ENCODE measurements at regions of chr22 and their contacts with region 1.

Region 1: DNA sequence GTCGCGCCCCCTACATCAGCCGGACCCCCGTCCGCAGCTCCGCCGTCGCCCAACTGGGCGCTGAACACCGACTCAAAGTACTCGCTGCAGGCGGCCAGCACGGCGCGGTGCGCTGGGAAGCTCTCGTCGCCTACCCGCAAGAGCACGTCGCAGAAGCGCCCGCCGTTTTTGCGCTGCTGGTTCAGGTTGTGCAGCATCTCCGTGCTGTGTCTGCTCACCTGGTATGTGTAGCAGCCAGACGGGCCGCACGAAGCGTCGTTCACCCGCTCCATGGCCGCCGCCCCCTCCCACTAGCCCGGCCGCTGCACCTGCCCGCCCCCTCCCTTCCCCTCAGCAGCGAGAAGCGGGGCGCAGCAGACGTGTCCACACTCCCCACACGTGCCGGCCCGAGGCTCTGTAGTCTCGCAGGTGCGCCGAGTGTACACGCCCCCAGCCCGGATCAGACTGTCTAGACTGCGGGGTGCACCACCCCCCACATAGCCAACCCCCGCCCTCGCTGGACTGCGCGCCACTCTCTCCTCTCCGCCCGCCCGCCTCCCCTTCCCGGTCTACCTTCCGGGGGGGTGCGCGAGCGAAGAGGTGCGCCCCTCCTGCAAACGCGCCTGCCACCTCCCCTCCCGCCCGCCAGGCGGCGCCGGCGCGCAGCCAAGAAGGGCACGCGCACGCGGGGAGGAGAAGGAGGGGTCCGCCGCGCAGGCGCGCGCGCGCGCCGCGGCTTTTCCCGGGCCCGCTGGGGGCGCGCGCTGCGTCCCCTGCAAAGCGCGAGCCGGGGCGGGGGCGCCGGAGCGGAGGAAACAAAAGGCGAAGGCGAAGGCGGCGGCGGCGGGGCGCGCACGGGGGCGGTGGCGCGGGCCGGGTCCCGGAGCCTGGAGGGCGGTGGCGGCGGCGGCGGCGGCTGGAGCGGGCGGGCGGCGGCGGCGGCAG is 553 bp downstream of the PATZ1 start:
- DNase-seq: peak; percentile 97
- H3K4me3 Mint-ChIP-seq: peak overlapping the region; percentile 93
- H3K27ac Mint-ChIP-seq: peak overlapping the region; percentile 92
- H3K4me1 Mint-ChIP-seq: peaks cover 37% of the 10 kb centered on the region
- H3K27me3 Mint-ChIP-seq: no peaks in the 10 kb centered on the region

Region 2: DNA sequence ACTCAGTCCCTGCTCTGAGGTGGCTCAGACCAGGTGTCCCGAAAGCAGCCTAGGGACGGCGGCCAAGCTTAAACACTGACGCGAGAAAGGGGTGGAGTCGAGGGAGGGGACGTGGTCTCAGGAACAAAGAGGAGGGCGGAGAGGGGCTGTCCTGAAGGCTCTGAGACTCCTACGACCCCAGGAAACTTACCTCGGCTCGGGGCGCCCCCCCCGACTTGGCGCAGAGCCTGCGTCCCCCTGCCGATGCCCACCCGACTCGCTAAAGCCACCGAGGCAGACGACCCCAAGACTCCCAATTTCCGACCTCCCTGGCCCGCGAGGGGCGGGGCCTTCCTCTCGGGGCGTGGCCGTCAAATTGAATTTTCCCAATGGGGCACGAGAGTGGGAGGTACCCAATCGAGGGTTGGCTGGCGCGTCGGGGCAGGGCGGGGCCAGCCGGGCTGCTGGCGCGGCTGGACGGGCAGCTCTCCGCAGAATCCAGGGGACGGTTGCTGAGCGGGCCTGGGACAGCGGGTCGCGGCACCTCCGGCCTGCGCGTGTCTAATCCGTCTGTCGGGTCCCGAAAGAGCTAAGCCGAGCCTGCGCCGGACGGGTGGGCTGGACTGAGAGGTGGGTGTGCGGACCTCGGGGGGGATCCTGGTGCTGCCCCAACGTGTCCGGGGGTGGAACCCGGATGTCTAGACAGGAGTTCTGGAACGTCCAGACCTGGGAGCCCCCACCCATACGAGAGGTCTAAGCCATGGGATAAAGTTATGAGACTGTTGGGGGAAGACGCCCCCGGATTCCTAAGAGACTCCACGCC is 264.5 kb before region 1 on chr22 and contains the start of gene SMTN:
- intact Hi-C with region 1: loop called (anchors 10 kb)
- DNase-seq: peak; percentile 98
- H3K4me3 Mint-ChIP-seq: peak within 1 kb of the TSS; percentile 91
- H3K27ac Mint-ChIP-seq: peak within 1 kb of the TSS; percentile 78
- H3K4me1 Mint-ChIP-seq: peaks cover 35% of the 10 kb centered on the region
- H3K27me3 Mint-ChIP-seq: no peaks in the 10 kb centered on the region
- total RNA-seq, gene SMTN: 13.9 and 17.9 TPM in 2 replicates

Region 3: DNA sequence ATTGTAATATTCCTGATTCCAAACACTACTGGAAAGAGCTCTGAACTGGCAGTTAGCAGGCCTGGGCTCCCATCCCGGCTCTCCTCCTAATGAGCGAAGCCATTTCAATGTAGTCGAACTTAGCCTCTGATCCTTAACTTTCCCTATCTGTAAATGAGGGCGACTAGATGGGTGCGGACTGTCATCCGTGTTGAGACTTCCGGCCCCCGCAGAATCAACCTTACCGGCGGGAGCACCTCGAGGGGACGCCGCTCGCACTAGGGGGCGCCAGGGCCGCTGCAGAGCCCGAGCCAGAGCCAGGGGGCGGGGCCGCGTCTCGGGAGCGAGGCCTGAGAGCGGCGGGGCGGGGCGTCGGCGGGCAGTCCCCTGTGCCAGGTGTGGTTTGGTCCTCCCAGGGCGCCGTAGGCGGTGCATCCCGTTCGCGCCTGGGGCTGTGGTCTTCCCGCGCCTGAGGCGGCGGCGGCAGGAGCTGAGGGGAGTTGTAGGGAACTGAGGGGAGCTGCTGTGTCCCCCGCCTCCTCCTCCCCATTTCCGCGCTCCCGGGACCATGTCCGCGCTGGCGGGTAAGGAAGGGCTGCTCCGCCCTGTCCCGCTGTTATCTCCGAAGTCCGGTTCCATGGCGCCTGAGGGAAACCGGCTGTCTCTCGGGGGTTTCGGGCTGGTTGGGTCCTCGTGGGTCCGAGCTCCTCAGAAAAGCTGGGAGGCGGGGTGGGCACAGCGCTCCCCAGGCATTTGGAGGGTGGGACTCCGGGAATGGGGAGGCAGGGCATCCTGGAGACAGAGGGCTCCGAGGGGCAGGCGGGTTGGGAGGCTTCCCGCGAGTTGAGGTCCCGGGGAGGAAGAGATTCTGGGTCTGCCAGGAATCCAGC is 133.5 kb before region 1 on chr22 and contains the start of gene LIMK2:
- intact Hi-C with region 1: loop called (anchors 2 kb)
- DNase-seq: peak; percentile 99
- H3K4me3 Mint-ChIP-seq: peak within 1 kb of the TSS; percentile 88
- H3K27ac Mint-ChIP-seq: peak within 1 kb of the TSS; percentile 86
- H3K4me1 Mint-ChIP-seq: peaks cover 43% of the 10 kb centered on the region
- H3K27me3 Mint-ChIP-seq: no peaks in the 10 kb centered on the region
- total RNA-seq, gene LIMK2: 34.2 and 35.9 TPM in 2 replicates

Region 4: GRCh38 chr22:31477329-31477728 is 131.7 kb after region 1 on chr22:
- intact Hi-C with region 1: no loop called
- DNase-seq: no peak
- H3K4me3 Mint-ChIP-seq: no peak overlapping the region
- H3K27ac Mint-ChIP-seq: peak overlapping the region; percentile 39
- H3K4me1 Mint-ChIP-seq: peaks cover 28% of the 10 kb centered on the region
- H3K27me3 Mint-ChIP-seq: no peaks in the 10 kb centered on the region

Region 5: DNA sequence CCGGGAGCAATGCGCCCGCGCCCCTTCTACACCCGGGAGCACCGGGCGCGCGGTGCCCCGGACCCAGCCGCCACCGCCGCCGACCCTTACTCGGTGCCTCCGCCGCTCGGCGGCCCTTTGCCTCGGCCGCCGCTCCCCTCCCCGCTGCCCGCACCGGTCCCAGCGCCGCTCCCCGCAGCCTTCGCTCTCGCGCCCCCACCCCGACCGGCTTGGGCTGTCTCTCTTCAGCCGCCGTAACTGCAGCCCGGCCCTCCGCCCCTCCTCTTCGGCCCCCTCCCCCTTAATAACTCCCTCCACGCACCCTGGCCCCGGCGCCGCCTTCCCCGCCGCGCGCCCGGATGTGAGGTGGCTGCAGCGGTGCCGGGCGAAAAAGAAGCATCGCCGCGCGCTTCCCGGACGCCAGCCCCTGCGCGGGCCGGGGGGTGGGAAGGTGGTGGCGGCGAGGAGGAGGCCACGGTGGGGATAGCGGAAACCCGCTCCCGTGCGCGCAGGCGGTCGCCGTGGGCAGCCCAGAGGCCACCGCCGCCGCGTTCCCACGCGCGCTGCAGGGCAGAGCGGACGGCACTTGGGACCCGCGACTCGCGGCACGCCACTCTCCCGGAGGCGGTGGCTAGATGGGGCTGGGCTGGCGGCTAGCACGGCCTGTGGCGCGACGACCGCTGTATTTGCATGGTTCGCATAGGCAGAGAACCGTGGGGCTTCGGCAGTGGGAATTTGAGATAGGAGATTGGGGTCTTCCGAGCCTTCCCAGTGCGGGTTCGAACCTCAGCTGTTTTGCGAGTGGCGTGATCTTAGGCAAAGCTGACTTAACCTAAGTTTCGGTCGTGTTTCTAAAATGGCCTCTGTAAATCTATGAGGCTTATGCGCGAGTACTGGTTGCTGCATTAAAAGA is 144.3 kb after region 1 on chr22 and contains the start of gene EIF4ENIF1:
- intact Hi-C with region 1: loop called (anchors 2 kb)
- DNase-seq: peak; percentile 95
- H3K4me3 Mint-ChIP-seq: peak within 1 kb of the TSS; percentile 90
- H3K27ac Mint-ChIP-seq: peak within 1 kb of the TSS; percentile 99
- H3K4me1 Mint-ChIP-seq: peaks cover 42% of the 10 kb centered on the region
- H3K27me3 Mint-ChIP-seq: no peaks in the 10 kb centered on the region
- total RNA-seq, gene EIF4ENIF1: 78.1 and 85.6 TPM in 2 replicates

Region 6: DNA sequence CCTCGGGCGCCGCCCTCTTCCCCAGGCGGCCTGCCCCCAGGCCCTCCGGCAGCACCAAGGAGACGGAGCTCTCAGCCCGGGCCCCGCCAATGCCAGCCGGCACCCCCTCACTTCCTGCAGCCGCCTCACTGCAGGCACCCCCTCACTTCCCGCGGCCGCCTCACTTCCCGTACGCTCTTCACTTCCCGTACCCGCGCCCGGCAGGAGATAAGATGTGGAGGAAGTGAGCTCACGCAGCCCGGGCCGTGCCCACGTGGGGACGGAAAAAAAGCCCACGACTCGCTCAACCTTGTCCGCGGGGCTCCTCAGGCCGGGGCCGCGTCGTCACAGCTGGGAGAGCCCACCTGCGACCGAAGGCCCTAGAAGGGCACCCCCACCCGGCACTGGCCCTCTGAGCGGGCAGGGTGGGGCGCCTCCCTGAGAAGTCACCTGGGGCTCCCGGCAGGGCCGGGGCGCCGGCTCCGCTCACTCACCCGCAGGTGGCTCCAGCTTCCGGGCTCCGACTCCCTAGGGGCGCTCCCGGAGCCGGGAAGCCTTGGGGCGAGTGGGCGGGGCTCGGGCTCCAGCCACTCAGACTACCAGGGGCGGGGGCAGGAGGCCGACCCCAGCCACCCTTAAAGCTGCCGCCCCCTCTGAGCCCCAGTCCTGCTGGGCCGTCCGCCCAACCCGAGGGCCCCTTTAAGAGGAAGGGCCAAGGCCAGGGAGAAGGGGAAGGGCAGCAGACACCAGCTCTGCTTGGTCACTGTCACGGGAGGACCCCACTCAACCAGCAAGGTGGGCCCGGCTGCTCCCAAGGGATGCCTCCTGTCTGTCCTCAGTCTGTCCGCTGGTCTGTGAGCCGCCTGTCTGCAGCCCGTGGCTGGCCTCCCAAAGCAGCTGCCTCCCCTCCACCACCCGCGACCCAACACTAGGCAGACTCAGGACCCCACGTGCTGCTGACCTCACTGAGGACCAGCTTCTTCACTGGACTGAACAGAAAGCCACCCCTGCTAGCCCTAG is 285.0 kb after region 1 on chr22:
- intact Hi-C with region 1: loop called (anchors 2 kb)
- DNase-seq: peak; percentile 95
- H3K4me3 Mint-ChIP-seq: peak overlapping the region; percentile 90
- H3K27ac Mint-ChIP-seq: peak overlapping the region; percentile 90
- H3K4me1 Mint-ChIP-seq: peaks cover 33% of the 10 kb centered on the region
- H3K27me3 Mint-ChIP-seq: no peaks in the 10 kb centered on the region

Measured in activated CD4-positive, alpha-beta T cell treated with anti-CD3 and anti-CD28 coated beads, Interleukin-2, amount 10 ng/mL, durations not matched to agents 24 days and 14 days (primary cell).